Uterus (tissue), 4 donors: ENCODE measurements at regions of chr1 and their contacts with region 1.

Region 1: GRCh38 chr1:179365320-179366092 is at the start of gene AXDND1:
- DNase-seq: peak; percentile 74 to 80
- H3K4me3 ChIP-seq: peak within 1 kb of the TSS; percentile 53 to 74
- H3K27ac ChIP-seq: peak within 1 kb of the TSS; percentile 87 to 90
- H3K4me1 ChIP-seq: no peaks in the 10 kb centered on the region
- H3K27me3 ChIP-seq: no peaks in the 10 kb centered on the region
- CTCF ChIP-seq: peak in 1 of 4 experiments; percentile 13
- POLR2A ChIP-seq: no peak
- total RNA-seq, gene AXDND1: 0.34 to 1.8 (median 0.55) TPM in 3 of 4 donors, not detected in the other

Region 2: GRCh38 chr1:179081687-179082332 is 283.7 kb before region 1 on chr1 and contains the start of gene TOR3A:
- intact Hi-C with region 1: loop called (anchors 5 kb)
- DNase-seq: peak; percentile 88 to 91
- H3K4me3 ChIP-seq: peak within 1 kb of the TSS; percentile 56 to 69
- H3K27ac ChIP-seq: peak within 1 kb of the TSS; percentile 52 to 79
- H3K4me1 ChIP-seq: peaks cover 4 to 5% of the 10 kb centered on the region in 2 donors
- H3K27me3 ChIP-seq: no peaks in the 10 kb centered on the region
- CTCF ChIP-seq: peak in 1 of 4 experiments; percentile 24
- POLR2A ChIP-seq: peak; percentile 81 to 86
- total RNA-seq, gene TOR3A: 5.9 to 43.3 (median 13.7) TPM

Region 3: DNA sequence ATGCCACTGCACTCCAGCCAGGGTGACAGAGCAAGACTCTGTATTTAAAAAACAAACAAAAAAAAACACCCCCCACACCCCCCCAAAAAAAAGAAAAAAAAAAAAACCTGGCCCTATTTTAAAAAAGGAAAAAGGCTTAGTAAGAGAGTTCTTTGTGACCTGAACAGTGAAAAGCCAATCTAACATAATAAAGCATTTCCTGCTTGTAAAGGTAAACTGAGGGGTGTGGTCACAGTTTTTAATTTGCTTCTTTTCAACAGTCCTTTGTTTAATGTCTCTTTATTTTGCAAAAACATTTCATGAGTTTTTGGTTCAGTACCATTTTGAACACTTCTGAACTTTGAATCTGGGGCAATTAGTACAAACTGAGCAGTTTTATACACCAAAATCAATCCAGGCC is 246.0 kb before region 1 on chr1:
- intact Hi-C with region 1: loop called (anchors 5 kb)
- DNase-seq: no peak
- H3K4me3 ChIP-seq: no peak overlapping the region
- H3K27ac ChIP-seq: no peak overlapping the region
- H3K4me1 ChIP-seq: no peaks in the 10 kb centered on the region
- H3K27me3 ChIP-seq: no peaks in the 10 kb centered on the region
- CTCF ChIP-seq: no peak
- POLR2A ChIP-seq: no peak